ENCODE measurements at regions of chr12 and their contacts with region 1.

Region 1: DNA sequence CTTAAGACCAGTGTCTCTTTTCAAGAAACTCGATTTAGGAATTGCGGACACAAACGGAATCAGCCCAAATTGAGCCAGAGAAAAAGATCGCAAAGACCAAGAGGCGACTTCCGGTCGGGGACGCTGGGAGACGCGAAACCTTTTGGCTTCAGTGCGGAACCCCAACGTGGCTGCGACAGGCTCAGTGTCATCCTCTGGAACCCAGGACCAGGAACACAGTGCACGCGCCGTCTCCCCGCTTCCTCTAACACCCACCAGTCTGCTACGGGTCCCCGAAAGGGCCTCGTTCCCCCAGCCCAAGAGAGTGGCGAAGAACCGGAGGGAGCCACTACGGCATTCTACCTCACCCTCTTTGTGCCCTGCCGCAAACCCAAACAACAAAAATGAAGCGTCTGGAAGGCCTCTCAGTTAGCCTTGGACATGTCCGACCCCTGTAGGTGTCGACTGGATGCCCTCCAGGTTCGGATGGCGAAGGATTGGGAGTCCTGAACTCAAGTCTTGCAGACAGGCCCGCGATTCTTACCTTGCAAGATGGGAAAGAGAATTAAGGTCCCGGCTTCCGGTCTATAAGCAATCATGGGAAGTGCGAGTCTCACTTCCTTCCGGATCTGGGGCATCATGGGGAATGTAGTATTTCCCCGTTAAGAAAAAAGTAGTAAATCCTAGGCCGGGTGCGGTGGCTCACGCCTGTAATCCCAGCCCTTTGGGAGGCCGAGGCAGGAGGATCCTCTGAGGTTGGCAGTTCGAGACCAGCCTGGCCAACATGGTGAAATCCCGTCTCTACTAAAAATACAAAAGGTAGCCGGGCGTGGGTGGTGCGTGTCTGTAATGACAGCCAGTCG is at the start of gene RPL6:
- DNase-seq: peak; percentile 92
- ATAC-seq: peak; percentile 89
- H3K4me3 ChIP-seq: peak within 1 kb of the TSS; percentile 72 to 87
- H3K27ac ChIP-seq: peak within 1 kb of the TSS; percentile 76
- H3K4me1 ChIP-seq: peaks cover 3 to 16% of the 10 kb centered on the region in 2 experiments; a peak in 2 of 4 replicates
- H3K27me3 ChIP-seq: no peaks in the 10 kb centered on the region
- CTCF ChIP-seq: no peak
- POLR2A ChIP-seq: peak; percentile 96
- RAD21 ChIP-seq: no peak
- total RNA-seq, gene RPL6: 1,845 TPM

Region 2: GRCh38 chr12:111819191-111820150 is 589.8 kb before region 1 on chr12:
- CTCF ChIA-PET with region 1: no interaction called
- POLR2A ChIA-PET with region 1: no interaction called
- RAD21 ChIA-PET with region 1: no interaction called
- intact Hi-C with region 1: loop called (anchors 1 kb)
- DNase-seq: no peak
- ATAC-seq: no peak
- H3K4me3 ChIP-seq: no peak overlapping the region
- H3K27ac ChIP-seq: no peak overlapping the region
- H3K4me1 ChIP-seq: no peaks in the 10 kb centered on the region
- H3K27me3 ChIP-seq: no peaks in the 10 kb centered on the region
- CTCF ChIP-seq: no peak
- POLR2A ChIP-seq: no peak
- RAD21 ChIP-seq: no peak

Region 3: DNA sequence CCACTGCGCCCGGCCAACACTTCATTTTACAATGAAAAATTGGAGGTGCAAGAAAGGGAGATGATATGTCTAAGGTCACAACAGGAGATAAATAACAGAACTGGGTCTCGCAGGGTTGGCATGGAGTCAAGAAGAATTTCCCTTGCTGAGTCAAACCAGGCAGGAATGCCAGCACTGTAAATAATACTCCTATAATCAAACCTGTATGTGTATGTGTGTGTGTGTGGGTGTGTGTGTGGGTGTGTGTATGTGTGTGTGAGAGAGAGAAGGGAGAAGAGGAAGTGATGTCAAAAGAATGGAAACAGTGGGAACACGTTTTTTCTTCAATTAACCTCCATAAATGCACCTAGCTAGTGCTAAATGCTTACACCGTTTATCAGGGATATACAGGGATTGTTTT is 466.7 kb before region 1 on chr12:
- CTCF ChIA-PET with region 1: interaction called, 3 read pairs
- POLR2A ChIA-PET with region 1: no interaction called
- RAD21 ChIA-PET with region 1: interaction called in 1 of 2 experiments, 4 read pairs
- intact Hi-C with region 1: loop called (anchors 1 kb)
- DNase-seq: no peak
- ATAC-seq: no peak
- H3K4me3 ChIP-seq: no peak overlapping the region
- H3K27ac ChIP-seq: no peak overlapping the region
- H3K4me1 ChIP-seq: no peaks in the 10 kb centered on the region; a peak in 1 of 4 replicates
- H3K27me3 ChIP-seq: no peaks in the 10 kb centered on the region
- CTCF ChIP-seq: no peak
- POLR2A ChIP-seq: no peak
- RAD21 ChIP-seq: no peak

Region 4: GRCh38 chr12:112198120-112198733 is 211.1 kb before region 1 on chr12:
- CTCF ChIA-PET with region 1: interaction called, 10 read pairs
- POLR2A ChIA-PET with region 1: no interaction called
- RAD21 ChIA-PET with region 1: interaction called in 1 of 2 experiments, 3 read pairs
- intact Hi-C with region 1: loop called (anchors 2 kb)
- DNase-seq: peak; percentile 41
- ATAC-seq: peak; percentile 99
- H3K4me3 ChIP-seq: no peak overlapping the region
- H3K27ac ChIP-seq: no peak overlapping the region
- H3K4me1 ChIP-seq: no peaks in the 10 kb centered on the region
- H3K27me3 ChIP-seq: no peaks in the 10 kb centered on the region
- CTCF ChIP-seq: peak; percentile 66 to 77 (median 71); a peak in 5 of 6 replicates
- POLR2A ChIP-seq: no peak
- RAD21 ChIP-seq: peak; percentile 75

Region 5: GRCh38 chr12:112473056-112473455 is 63.8 kb after region 1 on chr12:
- CTCF ChIA-PET with region 1: no interaction called
- POLR2A ChIA-PET with region 1: no interaction called
- RAD21 ChIA-PET with region 1: no interaction called
- intact Hi-C with region 1: no loop called
- DNase-seq: no peak
- ATAC-seq: peak; percentile 67
- H3K4me3 ChIP-seq: no peak overlapping the region
- H3K27ac ChIP-seq: no peak overlapping the region
- H3K4me1 ChIP-seq: no peaks in the 10 kb centered on the region
- H3K27me3 ChIP-seq: no peaks in the 10 kb centered on the region
- CTCF ChIP-seq: peak in 2 of 3 experiments; percentile 43 to 56; a peak in 3 of 6 replicates
- POLR2A ChIP-seq: no peak
- RAD21 ChIP-seq: no peak

Measured in HCT116 (cell line).